ENCODE measurements at regions of chr9 and their contacts with region 1.

Region 1: DNA sequence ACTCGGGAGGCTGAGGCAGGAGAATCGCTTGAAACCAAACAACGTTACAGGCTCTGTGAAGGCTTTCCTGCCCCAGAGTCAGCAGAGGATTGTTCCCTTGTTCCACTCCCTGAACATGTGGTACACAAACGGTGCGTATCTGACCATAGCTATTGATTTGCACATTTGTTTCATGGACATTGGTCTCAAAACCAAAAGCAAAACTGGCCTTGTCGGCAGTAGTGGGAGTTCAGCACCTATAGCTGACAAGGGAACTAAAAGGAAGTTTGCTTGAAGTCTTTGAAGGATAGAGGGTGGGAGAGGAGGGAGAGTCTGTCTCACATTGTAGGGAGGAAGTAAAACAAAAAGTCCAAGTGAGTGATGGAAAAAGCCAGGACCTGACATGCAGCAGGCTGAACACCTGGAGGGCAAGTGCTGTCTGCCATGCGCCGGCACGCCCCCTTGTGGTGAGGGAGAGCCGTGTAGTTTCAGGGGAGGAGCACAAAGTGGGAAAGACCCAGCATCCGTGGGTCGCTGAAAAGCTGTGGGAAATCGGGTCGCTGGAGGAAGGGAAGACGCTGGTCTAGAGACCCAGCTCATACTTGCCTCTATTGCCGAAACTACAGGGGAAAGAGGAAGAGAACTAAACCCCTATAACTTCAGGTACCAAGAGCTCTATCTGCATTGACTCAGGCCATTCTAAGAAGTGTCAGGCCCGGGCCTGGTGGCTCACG is 58.0 kb downstream of the RAD23B start:
- DNase-seq: peak; percentile 92
- ATAC-seq: peak; percentile 90
- H3K4me3 Mint-ChIP-seq: no peak overlapping the region
- H3K27ac Mint-ChIP-seq: peak overlapping the region; percentile 74
- H3K4me1 Mint-ChIP-seq: peaks cover 8% of the 10 kb centered on the region
- H3K27me3 Mint-ChIP-seq: no peaks in the 10 kb centered on the region

Region 2: GRCh38 chr9:105557771-105558610 is 1783.1 kb before region 1 on chr9 and contains the start of gene FKTN:
- CTCF ChIA-PET with region 1: no interaction called
- POLR2A ChIA-PET with region 1: no interaction called
- intact Hi-C with region 1: no loop called
- DNase-seq: peak; percentile 91
- ATAC-seq: peak; percentile 97
- H3K4me3 Mint-ChIP-seq: peak within 1 kb of the TSS; percentile 94
- H3K27ac Mint-ChIP-seq: peak within 1 kb of the TSS; percentile 85
- H3K4me1 Mint-ChIP-seq: peaks cover 18% of the 10 kb centered on the region
- H3K27me3 Mint-ChIP-seq: no peaks in the 10 kb centered on the region
- total RNA-seq, gene FKTN: 12.1 to 16.0 TPM

Region 3: DNA sequence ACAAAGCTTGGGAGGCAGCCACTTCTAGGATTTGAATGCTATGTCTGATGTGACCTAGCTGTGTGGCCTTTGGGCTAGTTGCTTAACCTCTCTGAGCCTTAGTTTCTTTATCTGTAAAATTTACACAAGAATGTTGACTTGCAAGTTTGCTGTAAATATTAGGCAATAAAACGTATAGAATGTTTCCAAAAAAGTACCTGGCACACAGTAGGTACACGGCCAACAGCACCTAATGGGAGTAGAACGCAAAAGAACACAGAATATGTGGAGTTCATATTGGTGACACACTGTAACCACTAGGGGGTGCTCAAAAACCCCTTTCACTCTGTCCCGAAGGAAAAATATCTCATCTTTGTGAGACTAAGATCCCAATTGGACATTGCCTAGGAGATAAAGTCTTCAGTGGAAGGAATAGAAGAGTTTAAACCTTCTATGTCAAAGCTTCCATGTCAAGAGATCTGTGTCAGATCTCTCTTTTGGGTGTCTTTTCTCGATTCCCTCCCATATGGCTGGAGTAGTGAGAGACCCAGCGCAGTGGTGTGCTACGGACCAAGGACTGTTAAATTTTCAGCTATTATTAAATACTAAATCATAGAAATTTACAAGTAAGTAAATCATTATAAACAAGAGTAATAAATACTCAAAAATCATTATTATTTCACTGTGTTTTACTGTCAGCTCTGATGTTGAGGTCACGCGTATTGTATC is 203.4 kb before region 1 on chr9:
- CTCF ChIA-PET with region 1: interaction called, 9 read pairs
- POLR2A ChIA-PET with region 1: no interaction called
- intact Hi-C with region 1: loop called in 1 of 2 experiments (anchors 1 kb)
- DNase-seq: peak; percentile 11
- ATAC-seq: no peak
- H3K4me3 Mint-ChIP-seq: no peak overlapping the region
- H3K27ac Mint-ChIP-seq: no peak overlapping the region
- H3K4me1 Mint-ChIP-seq: no peaks in the 10 kb centered on the region
- H3K27me3 Mint-ChIP-seq: peaks cover 12% of the 10 kb centered on the region

Region 4: GRCh38 chr9:107172160-107172978 is 168.7 kb before region 1 on chr9:
- CTCF ChIA-PET with region 1: interaction called, 3 read pairs
- POLR2A ChIA-PET with region 1: no interaction called
- intact Hi-C with region 1: loop called in 1 of 2 experiments (anchors 2 kb)
- DNase-seq: peak; percentile 82
- ATAC-seq: peak; percentile 49
- H3K4me3 Mint-ChIP-seq: no peak overlapping the region
- H3K27ac Mint-ChIP-seq: no peak overlapping the region
- H3K4me1 Mint-ChIP-seq: peaks cover 22% of the 10 kb centered on the region
- H3K27me3 Mint-ChIP-seq: peaks cover 7% of the 10 kb centered on the region

Region 5: DNA sequence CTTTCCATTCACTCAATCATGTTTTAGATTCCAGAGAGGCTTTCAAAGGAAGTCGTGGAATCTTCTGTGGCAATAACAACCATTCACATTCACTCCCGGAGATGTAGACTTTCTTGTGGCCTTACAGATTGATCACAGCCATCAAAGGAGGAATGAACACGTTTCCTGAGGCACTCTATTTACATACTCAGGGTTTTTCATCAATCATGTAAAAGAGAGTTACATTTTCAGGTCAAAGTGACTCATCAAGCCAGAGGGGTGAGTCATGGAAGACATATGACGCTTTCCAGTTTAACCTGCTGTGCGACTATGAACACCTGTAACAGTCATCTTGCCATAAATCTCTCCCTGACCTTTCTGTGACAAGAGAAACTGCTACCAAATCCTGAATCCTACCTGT is 97.3 kb before region 1 on chr9:
- CTCF ChIA-PET with region 1: interaction called, 7 read pairs
- POLR2A ChIA-PET with region 1: no interaction called
- intact Hi-C with region 1: loop called (anchors 2 kb)
- DNase-seq: peak; percentile 74
- ATAC-seq: peak; percentile 92
- H3K4me3 Mint-ChIP-seq: no peak overlapping the region
- H3K27ac Mint-ChIP-seq: peak overlapping the region; percentile 84
- H3K4me1 Mint-ChIP-seq: peaks cover 32% of the 10 kb centered on the region
- H3K27me3 Mint-ChIP-seq: peaks cover 2% of the 10 kb centered on the region

Region 6: DNA sequence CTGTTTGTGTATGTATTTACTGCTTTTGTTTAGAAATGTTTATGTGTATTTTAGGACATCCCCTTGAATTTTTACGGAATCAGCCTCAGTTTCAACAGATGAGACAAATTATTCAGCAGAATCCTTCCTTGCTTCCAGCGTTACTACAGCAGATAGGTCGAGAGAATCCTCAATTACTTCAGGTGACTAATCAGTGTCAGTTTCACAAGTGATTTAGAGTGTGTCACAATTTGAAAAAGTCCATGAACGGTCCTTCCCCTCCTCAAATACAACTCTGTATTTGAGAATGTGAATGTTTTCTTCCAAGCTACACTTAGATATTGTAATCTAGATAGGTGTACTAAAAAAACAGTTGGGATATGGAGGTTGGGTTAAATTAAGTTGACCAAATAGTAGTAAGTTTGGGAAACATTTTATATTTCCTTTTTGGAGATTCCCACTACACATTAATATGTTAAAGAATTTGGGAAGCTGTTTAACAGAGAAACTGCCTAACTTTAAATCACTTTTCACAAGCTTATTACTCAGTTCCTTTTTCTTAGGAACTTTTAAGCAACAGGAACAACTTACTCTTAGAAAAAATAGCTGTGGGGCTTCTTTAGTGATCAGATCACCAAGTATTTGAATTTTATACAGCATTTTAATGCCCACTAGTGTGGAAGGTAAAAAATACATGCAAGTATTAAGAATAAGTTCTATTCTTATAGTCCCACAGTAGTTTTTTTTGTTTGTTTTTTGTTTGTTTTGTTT is 17.1 kb before region 1 on chr9:
- CTCF ChIA-PET with region 1: interaction called, 16 read pairs
- POLR2A ChIA-PET with region 1: interaction called, 4 read pairs
- intact Hi-C with region 1: no loop called
- DNase-seq: no peak
- ATAC-seq: peak; percentile 81
- H3K4me3 Mint-ChIP-seq: no peak overlapping the region
- H3K27ac Mint-ChIP-seq: peak overlapping the region; percentile 20
- H3K4me1 Mint-ChIP-seq: peaks cover 11% of the 10 kb centered on the region
- H3K27me3 Mint-ChIP-seq: no peaks in the 10 kb centered on the region